Thyroid gland (tissue), 4 donors: ENCODE measurements at regions of chr2 and their contacts with region 1.

Region 1: GRCh38 chr2:133674433-133675331 is 106.4 kb upstream of the NCKAP5 start:
- DNase-seq: peak; percentile 53 to 63
- H3K4me3 ChIP-seq: peak overlapping the region in 1 of 3 donors; percentile 6
- H3K27ac ChIP-seq: peak overlapping the region; percentile 20 to 68 (median 58)
- H3K4me1 ChIP-seq: peaks cover 19 to 27% of the 10 kb centered on the region in 2 donors
- H3K27me3 ChIP-seq: no peaks in the 10 kb centered on the region
- CTCF ChIP-seq: no peak
- POLR2A ChIP-seq: no peak

Region 2: DNA sequence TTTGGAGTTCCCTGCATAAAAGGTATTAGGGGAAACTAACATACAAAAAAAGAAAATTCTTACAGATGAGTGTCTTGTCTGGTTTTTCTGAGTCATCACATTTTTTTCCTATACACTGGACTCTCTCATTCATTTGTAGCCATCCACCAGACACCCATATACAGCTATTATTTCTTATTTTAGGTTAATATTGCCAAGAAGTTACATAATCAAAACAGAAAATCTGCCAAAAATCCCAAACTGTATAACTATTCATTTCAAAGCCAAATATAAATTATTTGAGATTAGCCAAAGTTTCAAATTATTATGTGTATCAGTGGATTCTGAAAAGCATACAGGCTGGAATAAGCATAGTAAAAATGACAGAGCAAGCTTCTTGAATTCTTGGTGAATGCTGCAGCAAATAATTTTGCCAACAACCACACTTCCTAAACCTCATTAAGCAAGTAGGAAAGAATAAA is 297.6 kb before region 1 on chr2:
- intact Hi-C with region 1: no loop called
- DNase-seq: no peak
- H3K4me3 ChIP-seq: no peak overlapping the region
- H3K27ac ChIP-seq: no peak overlapping the region
- H3K4me1 ChIP-seq: no peaks in the 10 kb centered on the region
- H3K27me3 ChIP-seq: no peaks in the 10 kb centered on the region
- CTCF ChIP-seq: no peak
- POLR2A ChIP-seq: no peak

Region 3: GRCh38 chr2:133780099-133780839 is 105.6 kb after region 1 on chr2:
- intact Hi-C with region 1: loop called (anchors 10 kb)
- DNase-seq: peak; percentile 75 to 76
- H3K4me3 ChIP-seq: no peak overlapping the region
- H3K27ac ChIP-seq: no peak overlapping the region
- H3K4me1 ChIP-seq: no peaks in the 10 kb centered on the region
- H3K27me3 ChIP-seq: no peaks in the 10 kb centered on the region
- CTCF ChIP-seq: peak; percentile 66 to 91 (median 82)
- POLR2A ChIP-seq: no peak